ENCODE measurements at regions of chr11 and their contacts with region 1.

Region 1: DNA sequence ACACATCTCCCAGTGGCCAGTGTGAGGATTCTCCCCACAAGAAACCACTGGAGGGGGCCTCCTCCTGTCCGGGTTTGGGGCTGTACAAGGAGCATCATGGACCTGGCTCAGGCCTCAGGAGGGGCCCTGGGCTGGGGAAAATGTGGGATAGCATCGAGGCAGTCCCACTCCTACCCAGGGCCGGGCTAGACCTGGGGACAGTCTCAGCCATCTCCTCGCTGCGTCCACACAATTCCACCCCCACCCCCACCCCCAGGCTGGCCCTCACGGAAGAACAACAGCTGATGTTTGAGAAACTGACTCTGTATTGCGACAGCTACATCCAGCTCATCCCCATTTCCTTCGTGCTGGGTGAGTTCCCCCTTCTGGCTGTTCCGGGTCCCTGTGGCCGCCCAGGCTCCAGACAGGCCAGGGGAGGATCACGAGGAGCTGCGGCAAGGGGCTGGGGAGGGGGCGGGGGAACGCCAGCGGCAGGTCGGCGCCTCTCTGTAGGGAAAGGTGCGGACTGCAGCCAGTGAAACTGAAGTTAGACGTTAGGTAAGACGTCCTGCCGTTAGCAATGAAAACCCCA is 4.8 kb downstream of the BEST1 start:
- DNase-seq: peak; percentile 65
- ATAC-seq: peak; percentile 54
- H3K4me3 Mint-ChIP-seq: peak overlapping the region; percentile 56
- H3K27ac Mint-ChIP-seq: no peak overlapping the region
- H3K4me1 Mint-ChIP-seq: peaks cover 5% of the 10 kb centered on the region; the same call in 1 of the 2 replicates
- H3K27me3 Mint-ChIP-seq: peaks cover 26% of the 10 kb centered on the region
- CTCF ChIP-seq: no peak

Region 2: GRCh38 chr11:61912530-61912898 is 42.4 kb before region 1 on chr11:
- CTCF ChIA-PET with region 1: interaction called, 14 read pairs
- POLR2A ChIA-PET with region 1: interaction called, 11 read pairs
- DNase-seq: peak; percentile 2
- ATAC-seq: no peak
- H3K4me3 Mint-ChIP-seq: no peak overlapping the region
- H3K27ac Mint-ChIP-seq: no peak overlapping the region; the same call in 1 of the 2 replicates
- H3K4me1 Mint-ChIP-seq: peaks cover 19% of the 10 kb centered on the region
- H3K27me3 Mint-ChIP-seq: peaks cover 17% of the 10 kb centered on the region
- CTCF ChIP-seq: no peak

Region 3: DNA sequence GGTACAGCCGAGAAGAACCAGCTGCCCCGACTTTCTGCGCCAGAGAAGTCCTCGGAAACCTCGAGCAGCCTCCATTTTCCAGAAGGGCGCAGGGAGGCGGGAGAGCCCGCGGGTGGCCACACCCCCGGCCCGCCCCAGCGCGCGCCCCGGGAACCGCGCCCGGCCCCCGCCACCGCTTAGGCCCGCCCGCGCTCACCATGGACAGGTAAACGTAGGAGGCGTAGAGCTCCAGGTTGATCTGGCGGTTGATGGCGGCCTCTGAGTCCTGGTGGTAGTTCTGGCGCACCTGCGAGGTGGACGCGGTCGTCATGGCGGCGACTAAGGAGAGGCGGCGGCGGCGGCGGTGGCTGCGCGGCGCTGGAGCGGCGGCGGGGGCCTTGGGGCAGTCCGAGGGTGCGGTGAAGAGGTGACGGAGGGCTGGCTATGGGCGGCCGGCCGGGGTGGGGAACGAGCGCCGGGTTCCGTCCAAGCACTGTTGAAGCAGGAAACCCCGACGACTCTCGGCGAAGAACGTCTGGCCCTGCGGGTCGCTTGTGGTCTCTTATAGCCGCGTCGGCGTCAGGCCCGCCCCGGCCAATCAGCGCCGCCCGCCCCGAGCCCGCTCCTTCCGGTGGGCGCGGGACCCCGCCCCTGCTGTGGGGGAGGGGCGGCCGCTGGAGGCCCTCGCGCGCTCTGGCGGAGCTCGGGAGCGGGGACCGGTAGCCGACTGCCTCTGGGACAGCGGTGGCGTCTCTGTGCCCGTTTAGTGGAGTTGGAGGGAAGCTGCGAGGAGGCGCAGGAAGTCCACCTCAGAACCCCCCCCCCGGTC is 12.4 kb after region 1 on chr11 and contains the start of gene FTH1:
- CTCF ChIA-PET with region 1: interaction called, 11 read pairs
- POLR2A ChIA-PET with region 1: interaction called, 23 read pairs
- DNase-seq: peak; percentile 85
- ATAC-seq: peak; percentile 76
- H3K4me3 Mint-ChIP-seq: peak within 1 kb of the TSS; percentile 94
- H3K27ac Mint-ChIP-seq: peak within 1 kb of the TSS; percentile 80
- H3K4me1 Mint-ChIP-seq: peaks cover 42% of the 10 kb centered on the region
- H3K27me3 Mint-ChIP-seq: no peaks in the 10 kb centered on the region; the same call in 1 of the 2 replicates
- CTCF ChIP-seq: no peak
- total RNA-seq, gene FTH1: 1,108 to 1,272 TPM (median 1,247 TPM) in 3 replicates

Region 4: GRCh38 chr11:62044639-62045121 is 89.7 kb after region 1 on chr11:
- CTCF ChIA-PET with region 1: no interaction called
- POLR2A ChIA-PET with region 1: no interaction called
- DNase-seq: no peak
- ATAC-seq: no peak
- H3K4me3 Mint-ChIP-seq: no peak overlapping the region
- H3K27ac Mint-ChIP-seq: no peak overlapping the region
- H3K4me1 Mint-ChIP-seq: no peaks in the 10 kb centered on the region
- H3K27me3 Mint-ChIP-seq: no peaks in the 10 kb centered on the region; the same call in 1 of the 2 replicates
- CTCF ChIP-seq: no peak